ENCODE measurements at regions of chr3 and their contacts with region 1.

Region 1: DNA sequence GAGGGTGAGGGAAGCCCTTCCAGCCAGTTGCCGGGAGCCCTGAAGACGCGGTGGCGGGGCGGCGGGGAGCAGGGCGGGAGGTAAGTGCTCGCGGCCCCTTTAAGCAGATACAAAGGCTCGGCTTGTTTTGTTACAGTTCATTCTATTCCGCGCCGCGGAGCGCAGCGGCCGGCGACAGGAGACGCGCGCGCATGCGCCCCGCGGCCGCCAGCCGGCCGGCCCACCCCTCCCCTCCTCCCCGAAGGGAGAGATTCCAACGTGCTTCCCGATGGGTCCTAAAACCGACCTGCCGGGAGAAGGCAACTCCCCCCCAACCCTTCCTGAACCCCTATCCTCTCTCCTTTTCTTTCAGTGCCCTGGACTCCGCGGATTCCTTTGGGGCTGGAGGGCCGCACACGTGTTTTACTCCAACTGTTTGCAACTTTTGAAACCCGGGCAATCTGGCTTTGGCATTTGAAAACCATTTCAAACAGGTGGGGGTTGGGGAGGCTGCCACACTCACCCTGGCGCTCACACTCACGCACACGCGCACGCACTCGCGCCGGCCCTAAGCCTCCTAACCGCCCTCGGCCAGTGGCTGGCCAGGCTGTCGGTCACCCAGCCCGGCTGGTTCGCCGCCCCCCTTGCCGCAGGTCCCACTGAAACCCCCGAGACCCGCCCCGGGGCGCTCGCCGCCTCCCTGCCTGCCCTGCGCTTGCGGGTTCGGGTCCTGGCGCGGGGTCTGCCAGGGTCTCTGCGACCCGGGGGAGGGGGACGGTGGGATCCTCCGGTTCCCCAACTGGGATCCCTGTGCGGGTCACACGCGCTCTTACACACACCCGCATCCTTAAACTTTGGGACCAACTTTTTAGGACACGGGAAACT is at the start of gene MAGI1:
- DNase-seq: peak; percentile 91 to 94 (median 92)
- ATAC-seq: peak; percentile 87 to 92 (median 90)
- H3K4me3 ChIP-seq: peak within 1 kb of the TSS; percentile 52 to 97 (median 90)
- H3K27ac ChIP-seq: peak within 1 kb of the TSS; percentile 85 to 98 (median 94)
- H3K4me1 ChIP-seq: peaks cover 0 to 31% (median 15%) of the 10 kb centered on the region in 12 donors
- H3K27me3 ChIP-seq: peaks cover 0 to 32% (median 0%) of the 10 kb centered on the region in 9 donors
- CTCF ChIP-seq: peak in 1 of 12 donors; percentile 6
- POLR2A ChIP-seq: peak in 1 of 2 donors; percentile 77
- total RNA-seq, gene MAGI1: 27.1 to 52.1 (median 35.9) TPM

Region 2: GRCh38 chr3:65888980-65889706 is 149.8 kb before region 1 on chr3:
- intact Hi-C with region 1: loop called in 1 of 10 experiments (anchors 10 kb)
- DNase-seq: peak in 2 of 5 donors; percentile 19 to 21
- ATAC-seq: peak; percentile 87 to 97 (median 94)
- H3K4me3 ChIP-seq: no peak overlapping the region
- H3K27ac ChIP-seq: peak overlapping the region in 11 of 12 donors; percentile 8 to 80 (median 52)
- H3K4me1 ChIP-seq: peaks cover 0 to 23% (median 7%) of the 10 kb centered on the region in 12 donors
- H3K27me3 ChIP-seq: no peaks in the 10 kb centered on the region
- CTCF ChIP-seq: no peak
- POLR2A ChIP-seq: no peak

Region 3: GRCh38 chr3:65946438-65946837 is 92.5 kb before region 1 on chr3:
- intact Hi-C with region 1: loop called in 5 of 10 experiments (anchors 5 kb)
- DNase-seq: peak in 3 of 5 donors; percentile 28 to 44 (median 33)
- ATAC-seq: peak; percentile 28 to 68 (median 44)
- H3K4me3 ChIP-seq: no peak overlapping the region
- H3K27ac ChIP-seq: peak overlapping the region; percentile 3 to 77 (median 59)
- H3K4me1 ChIP-seq: peaks cover 2 to 75% (median 47%) of the 10 kb centered on the region in 12 donors
- H3K27me3 ChIP-seq: no peaks in the 10 kb centered on the region
- CTCF ChIP-seq: no peak
- POLR2A ChIP-seq: no peak

Region 4: DNA sequence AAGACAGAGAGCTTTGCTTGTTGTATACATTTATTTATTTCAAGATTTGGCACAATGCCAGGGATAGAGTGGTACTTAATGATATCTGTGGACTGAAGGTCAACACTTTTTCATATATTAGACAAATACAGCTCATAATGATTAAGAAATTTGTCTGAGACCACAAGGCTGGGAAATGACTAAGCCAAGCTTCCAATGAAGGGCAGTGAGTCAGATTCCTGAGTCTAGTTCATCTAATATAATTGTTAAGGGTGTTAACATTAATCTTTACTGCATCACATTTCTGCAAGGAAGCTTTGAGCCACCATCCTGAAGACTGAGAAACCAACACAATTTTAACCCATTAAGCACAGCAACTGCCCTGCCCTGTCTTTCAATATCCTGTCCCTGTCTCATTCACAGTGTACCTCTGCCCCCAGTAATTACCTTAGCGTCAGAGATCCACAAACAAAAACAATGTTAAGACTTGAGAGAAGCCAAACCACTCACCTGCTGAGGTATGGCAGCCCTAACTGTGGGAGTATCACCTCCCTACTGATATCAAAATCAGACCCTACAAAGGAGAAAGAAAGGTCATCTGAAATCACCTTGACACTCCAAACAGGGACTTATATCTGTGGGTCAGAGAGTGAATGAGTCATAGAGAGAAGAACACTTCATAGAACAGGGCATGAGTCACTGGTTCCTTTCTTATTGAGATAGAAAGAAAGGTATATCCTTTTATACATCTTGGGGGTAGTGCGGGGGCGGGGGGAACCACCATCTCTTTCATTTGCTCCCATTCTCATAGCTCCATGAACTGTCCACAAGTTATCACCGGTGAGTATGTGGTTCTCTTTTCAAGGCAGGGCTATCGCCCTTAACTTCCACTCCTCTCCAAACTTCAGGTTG is 74.9 kb before region 1 on chr3:
- intact Hi-C with region 1: loop called in 2 of 10 experiments (anchors 5 to 10 kb)
- DNase-seq: no peak
- ATAC-seq: peak in 3 of 4 donors; percentile 51 to 70 (median 53)
- H3K4me3 ChIP-seq: no peak overlapping the region
- H3K27ac ChIP-seq: peak overlapping the region in 4 of 12 donors; percentile 8 to 54 (median 34)
- H3K4me1 ChIP-seq: peaks cover 0 to 65% (median 31%) of the 10 kb centered on the region in 12 donors
- H3K27me3 ChIP-seq: no peaks in the 10 kb centered on the region
- CTCF ChIP-seq: no peak
- POLR2A ChIP-seq: no peak

Region 5: DNA sequence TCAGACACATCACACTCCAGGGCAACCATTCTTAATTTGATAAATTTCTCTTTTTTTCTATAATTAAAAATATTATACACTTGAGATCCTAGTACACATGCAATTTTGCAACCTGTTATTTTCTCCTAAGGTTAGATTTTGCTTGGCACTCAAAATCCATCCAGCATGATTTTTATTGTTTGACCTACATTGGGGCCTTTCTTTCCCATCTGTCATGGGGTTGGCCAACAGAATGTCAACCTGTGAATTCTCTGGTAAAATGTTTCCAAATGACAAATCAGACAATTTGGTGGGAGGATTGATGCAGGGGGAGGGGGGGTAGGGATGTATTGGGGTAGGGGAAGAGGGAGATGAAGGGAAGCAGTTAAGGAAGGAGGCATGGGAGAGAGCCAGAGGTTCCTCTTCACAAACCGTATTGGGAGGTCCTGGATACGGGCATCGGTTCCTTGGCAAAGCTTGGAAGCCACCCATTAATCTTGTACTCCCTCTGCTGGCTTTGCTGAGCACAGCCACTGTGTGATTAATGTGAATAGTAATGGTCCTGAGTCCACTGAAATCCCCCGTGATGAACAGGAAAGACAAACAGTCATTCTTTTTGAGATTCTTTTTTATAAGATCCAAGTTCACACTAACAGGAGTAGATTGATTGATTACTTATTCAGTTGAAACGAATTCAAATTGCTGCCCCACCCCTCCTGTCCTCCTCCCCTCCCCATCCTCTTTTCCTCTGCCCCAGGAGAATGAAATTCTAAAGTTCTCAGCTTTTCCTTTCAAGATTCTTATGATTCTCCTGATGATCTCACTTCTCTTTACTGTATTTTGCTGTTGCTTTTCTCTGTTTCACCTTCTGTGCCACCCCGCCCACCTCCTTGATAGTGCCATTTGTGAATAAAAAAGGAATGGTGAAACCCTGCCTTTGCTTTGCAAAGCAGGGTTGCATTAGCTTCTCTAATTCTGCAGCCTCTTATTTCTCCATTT is 99.7 kb after region 1 on chr3:
- intact Hi-C with region 1: loop called in 9 of 10 experiments (anchors 1 to 5 kb)
- DNase-seq: peak in 4 of 5 donors; percentile 42 to 63 (median 54)
- ATAC-seq: peak; percentile 75 to 93 (median 89)
- H3K4me3 ChIP-seq: no peak overlapping the region
- H3K27ac ChIP-seq: peak overlapping the region in 5 of 12 donors; percentile 6 to 21 (median 11)
- H3K4me1 ChIP-seq: peaks cover 0 to 15% (median 2%) of the 10 kb centered on the region in 12 donors
- H3K27me3 ChIP-seq: no peaks in the 10 kb centered on the region
- CTCF ChIP-seq: peak; percentile 49 to 89 (median 80)
- POLR2A ChIP-seq: no peak

Region 6: GRCh38 chr3:66186545-66186944 is 147.6 kb after region 1 on chr3:
- intact Hi-C with region 1: loop called in 5 of 10 experiments (anchors 5 to 10 kb)
- DNase-seq: no peak
- ATAC-seq: no peak
- H3K4me3 ChIP-seq: no peak overlapping the region
- H3K27ac ChIP-seq: peak overlapping the region in 7 of 12 donors; percentile 1 to 87 (median 23)
- H3K4me1 ChIP-seq: peaks cover 0 to 26% (median 9%) of the 10 kb centered on the region in 12 donors
- H3K27me3 ChIP-seq: no peaks in the 10 kb centered on the region
- CTCF ChIP-seq: no peak
- POLR2A ChIP-seq: no peak

Measured in heart left ventricle (tissue), 16 donors.